Motor neuron (in vitro differentiated cells): ENCODE measurements at regions of chr10 and their contacts with region 1.

Region 1: GRCh38 chr10:16116404-16117304 is 256.3 kb upstream of the MINDY3 start:
- ATAC-seq: peak in 3 of 8 experiments; percentile 34 to 56 (median 49)
- H3K4me3 ChIP-seq: no peak overlapping the region
- H3K27ac ChIP-seq: no peak overlapping the region
- H3K4me1 ChIP-seq: peaks cover 0 to 5% of the 10 kb centered on the region in 2 donors

Region 2: DNA sequence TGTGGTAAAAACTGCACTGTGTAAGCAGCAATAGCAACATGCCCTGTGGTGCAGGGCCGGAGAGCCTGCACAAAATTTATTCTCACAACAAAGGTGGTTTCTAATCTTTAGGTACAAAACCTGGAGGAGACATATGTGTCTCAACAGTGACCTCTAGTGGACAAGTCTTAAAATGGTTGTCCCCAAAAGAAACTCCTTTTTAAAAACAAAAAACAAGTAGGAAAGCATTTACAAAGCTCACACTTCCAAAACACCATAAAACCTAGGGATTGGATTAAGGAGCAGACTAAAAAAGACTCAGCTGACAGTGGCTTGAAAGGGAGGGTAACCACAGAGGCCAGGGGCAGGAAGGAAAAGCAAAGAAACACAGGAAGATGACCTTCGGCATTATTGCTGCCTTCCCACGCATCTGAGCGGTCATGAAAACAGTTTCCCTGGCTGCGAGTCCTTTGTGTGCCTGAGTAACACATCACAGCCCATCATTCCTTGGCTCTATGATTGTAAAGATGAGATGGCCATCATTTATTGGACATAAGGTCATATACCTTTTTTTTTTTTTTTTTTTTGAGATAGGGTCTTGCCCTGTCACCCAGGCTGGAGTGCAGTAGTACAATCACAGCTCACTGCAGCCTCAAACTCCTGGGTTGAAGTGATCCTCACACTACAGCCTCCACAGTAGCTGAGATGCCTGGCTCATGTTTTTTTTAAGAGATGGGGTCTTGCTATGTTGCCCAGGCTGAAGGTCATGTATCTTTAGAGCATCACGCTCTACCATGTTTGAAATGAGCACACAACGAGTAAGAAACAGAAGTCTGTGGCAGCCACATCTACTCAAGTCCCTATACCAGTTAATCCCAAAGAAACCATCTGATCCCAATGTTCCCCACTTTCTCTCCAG is 661.1 kb after region 1 on chr10:
- in situ Hi-C with region 1: loop called in 2 of 9 experiments (anchors 25 kb)
- ATAC-seq: peak in 2 of 8 experiments; percentile 26 to 34
- H3K4me3 ChIP-seq: no peak overlapping the region
- H3K27ac ChIP-seq: no peak overlapping the region
- H3K4me1 ChIP-seq: peaks cover 0 to 12% of the 10 kb centered on the region in 2 donors

Region 3: DNA sequence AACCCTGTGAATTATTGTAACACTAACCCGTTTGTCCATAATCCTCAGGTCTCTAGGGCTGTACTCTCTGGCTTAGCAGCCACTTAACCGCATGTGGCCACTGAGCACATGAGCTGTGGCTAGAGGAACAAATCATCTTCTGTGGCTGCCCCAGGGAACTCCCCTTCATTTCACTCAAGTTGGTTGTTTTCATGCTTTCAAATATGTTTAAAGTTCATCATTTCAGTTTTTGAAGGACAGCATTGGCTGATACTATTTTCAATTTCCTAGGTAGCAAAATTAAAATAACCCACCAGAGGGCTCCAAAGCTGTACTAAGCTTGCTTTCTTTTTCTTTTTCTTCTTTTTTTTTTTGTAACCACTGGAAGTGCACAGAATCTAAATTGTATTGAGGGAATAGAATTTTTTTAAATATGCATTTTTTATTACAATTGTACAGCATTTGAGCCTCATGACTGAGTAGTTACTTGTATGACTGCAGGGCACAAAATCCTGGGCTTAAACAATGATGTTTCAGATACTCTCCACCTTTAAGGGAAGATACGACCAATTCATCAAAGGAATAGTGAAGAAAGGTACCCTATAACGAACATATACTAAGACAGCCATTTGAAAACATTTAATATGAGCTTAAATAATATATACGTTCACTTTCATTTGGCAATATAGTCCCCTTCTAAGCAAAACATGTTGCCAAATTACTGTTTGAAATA is 1731.1 kb after region 1 on chr10:
- in situ Hi-C with region 1: no loop called
- ATAC-seq: peak in 7 of 8 experiments; percentile 18 to 72 (median 41)
- H3K4me3 ChIP-seq: no peak overlapping the region
- H3K27ac ChIP-seq: no peak overlapping the region
- H3K4me1 ChIP-seq: peaks cover 0 to 2% of the 10 kb centered on the region in 2 donors